MCF 10A (cell line): ENCODE measurements at regions of chr9 and their contacts with region 1.

Region 1: DNA sequence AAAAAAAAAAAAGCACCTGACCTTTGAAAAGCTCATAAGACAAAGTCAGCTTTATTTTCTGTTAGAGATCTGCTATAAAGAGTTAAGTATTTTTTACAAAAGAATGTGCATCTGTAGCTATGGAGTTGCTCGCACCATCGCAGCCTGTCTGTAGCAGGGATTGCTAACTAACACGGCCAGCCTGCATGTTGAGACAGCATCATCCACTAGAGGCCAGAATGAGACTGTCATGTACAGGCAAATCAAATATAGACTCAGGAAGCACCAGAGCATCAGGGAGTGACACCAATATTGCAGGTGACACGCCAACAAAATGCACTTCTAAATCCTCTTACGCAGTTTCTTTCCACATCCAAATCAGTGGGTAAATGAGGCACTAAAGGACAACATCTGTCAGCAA is 136.3 kb upstream of the RASEF start:
- DNase-seq: peak; percentile 56
- H3K4me3 Mint-ChIP-seq: no peak overlapping the region
- H3K27ac Mint-ChIP-seq: no peak overlapping the region
- H3K4me1 Mint-ChIP-seq: no peaks in the 10 kb centered on the region
- H3K27me3 Mint-ChIP-seq: no peaks in the 10 kb centered on the region
- CTCF ChIP-seq: peak; percentile 43

Region 2: DNA sequence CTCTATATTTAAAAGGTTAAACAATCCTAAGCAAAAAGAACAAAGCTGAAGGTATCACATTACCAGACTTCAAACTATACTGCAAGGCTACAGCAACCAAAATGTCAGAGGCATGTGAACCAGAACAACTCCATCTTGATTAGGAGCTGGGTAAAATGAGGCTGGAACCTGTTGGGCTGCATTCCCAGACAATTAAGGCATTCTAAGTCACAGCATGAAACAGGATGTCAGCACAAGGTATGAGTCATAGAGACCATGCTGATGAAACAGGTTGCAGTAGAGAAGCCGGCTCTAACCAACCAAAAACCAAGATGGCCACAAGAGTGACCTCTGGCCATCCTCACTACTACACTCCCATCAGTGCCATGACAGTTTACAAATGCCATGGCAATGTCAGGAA is 388.3 kb before region 1 on chr9:
- CTCF ChIA-PET with region 1: no interaction called
- POLR2A ChIA-PET with region 1: no interaction called
- intact Hi-C with region 1: no loop called
- DNase-seq: peak; percentile 60
- H3K4me3 Mint-ChIP-seq: no peak overlapping the region
- H3K27ac Mint-ChIP-seq: no peak overlapping the region
- H3K4me1 Mint-ChIP-seq: no peaks in the 10 kb centered on the region
- H3K27me3 Mint-ChIP-seq: no peaks in the 10 kb centered on the region
- CTCF ChIP-seq: no peak

Region 3: DNA sequence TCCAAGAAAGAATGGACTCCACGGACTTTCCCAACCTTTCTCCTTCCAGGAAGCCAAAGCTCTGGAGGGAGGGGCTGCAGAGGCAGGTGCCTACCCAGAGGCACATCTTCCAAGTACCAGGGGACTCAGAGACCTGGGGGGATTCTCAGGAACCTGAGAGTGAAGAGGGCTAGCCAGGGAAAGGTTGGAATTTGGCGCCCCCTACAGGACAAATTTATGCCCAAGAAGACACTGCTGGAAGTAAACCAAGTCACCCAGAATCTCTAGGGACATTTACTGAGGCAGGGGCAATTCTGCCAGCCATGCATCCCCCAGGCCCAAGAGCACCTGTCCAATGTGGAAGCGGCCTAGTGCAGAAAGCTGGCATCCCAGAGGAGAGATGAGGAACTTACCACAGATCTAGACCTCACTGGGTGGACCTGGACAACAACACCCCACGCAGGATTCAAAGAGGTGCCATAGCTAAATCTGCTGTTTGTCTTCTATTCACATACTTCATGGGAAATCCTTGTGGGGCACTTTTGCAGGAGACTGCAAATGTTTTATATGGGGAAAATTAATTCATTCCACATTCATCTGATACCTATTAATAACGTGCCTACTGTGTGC is 397.8 kb after region 1 on chr9:
- CTCF ChIA-PET with region 1: interaction called, 3 read pairs
- POLR2A ChIA-PET with region 1: no interaction called
- intact Hi-C with region 1: loop called (anchors 2 kb)
- DNase-seq: peak; percentile 53
- H3K4me3 Mint-ChIP-seq: no peak overlapping the region
- H3K27ac Mint-ChIP-seq: no peak overlapping the region
- H3K4me1 Mint-ChIP-seq: peaks cover 5% of the 10 kb centered on the region
- H3K27me3 Mint-ChIP-seq: no peaks in the 10 kb centered on the region
- CTCF ChIP-seq: peak; percentile 69